ENCODE measurements at regions of chr1 and their contacts with region 1.

Region 1: DNA sequence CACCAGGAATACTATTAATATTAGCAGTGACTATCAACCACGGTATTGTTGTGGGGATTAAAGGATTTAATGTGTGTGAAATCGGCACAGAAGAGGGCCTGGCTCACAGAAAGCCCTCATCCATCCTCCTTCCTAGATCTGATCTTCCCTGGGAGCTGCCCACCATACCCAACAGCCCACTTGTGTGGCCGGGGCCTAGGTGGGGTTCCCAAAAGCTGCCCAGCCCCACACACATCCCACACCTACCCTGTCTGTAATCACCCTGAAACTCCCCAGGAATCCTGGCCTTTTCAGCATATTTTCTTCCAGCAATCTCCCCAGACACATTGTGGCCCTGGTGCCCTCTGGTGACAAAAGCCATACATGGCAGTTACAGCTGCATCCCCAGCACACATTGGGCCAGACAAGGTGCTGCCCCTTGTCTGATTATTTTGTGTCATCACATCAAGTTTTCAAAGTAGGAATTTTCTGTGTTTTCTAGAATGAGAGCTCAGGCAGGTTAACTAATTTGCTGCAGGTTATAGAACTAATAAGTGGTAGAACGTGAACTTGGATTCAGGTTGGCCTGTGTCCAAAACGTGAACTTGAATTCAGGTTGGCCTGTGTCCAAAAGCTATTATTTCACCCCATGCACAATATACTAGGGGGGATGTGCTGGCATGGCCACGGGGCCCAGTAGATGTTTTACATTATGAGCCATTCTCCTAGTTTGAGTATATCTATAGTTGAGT is 5.3 kb upstream of the SLC6A9 start:
- DNase-seq: peak; percentile 33 to 77 (median 67)
- ATAC-seq: peak; percentile 93
- H3K4me3 ChIP-seq: no peak overlapping the region
- H3K4me3 Mint-ChIP-seq: no peak overlapping the region
- H3K27ac ChIP-seq: no peak overlapping the region
- H3K27ac Mint-ChIP-seq: no peak overlapping the region
- H3K4me1 ChIP-seq: no peaks in the 10 kb centered on the region
- H3K4me1 Mint-ChIP-seq: peaks cover 3% of the 10 kb centered on the region
- H3K27me3 ChIP-seq: no peaks in the 10 kb centered on the region
- H3K27me3 Mint-ChIP-seq: no peaks in the 10 kb centered on the region
- CTCF ChIP-seq: peak; percentile 84

Region 2: GRCh38 chr1:43529206-43529731 is 507.3 kb before region 1 on chr1:
- CTCF ChIA-PET with region 1: interaction called, 8 read pairs
- POLR2A ChIA-PET with region 1: no interaction called
- intact Hi-C with region 1: loop called in 1 of 2 experiments (anchors 1 kb)
- DNase-seq: peak; percentile 60 to 89 (median 80)
- ATAC-seq: peak; percentile 65
- H3K4me3 ChIP-seq: no peak overlapping the region
- H3K4me3 Mint-ChIP-seq: peak overlapping the region; percentile 88
- H3K27ac ChIP-seq: no peak overlapping the region
- H3K27ac Mint-ChIP-seq: no peak overlapping the region
- H3K4me1 ChIP-seq: peaks cover 15% of the 10 kb centered on the region
- H3K4me1 Mint-ChIP-seq: peaks cover 21% of the 10 kb centered on the region
- H3K27me3 ChIP-seq: peaks cover 14% of the 10 kb centered on the region in 2 experiments
- H3K27me3 Mint-ChIP-seq: peaks cover 41% of the 10 kb centered on the region
- CTCF ChIP-seq: peak; percentile 96

Region 3: GRCh38 chr1:43554444-43554992 is 482.1 kb before region 1 on chr1:
- CTCF ChIA-PET with region 1: no interaction called
- POLR2A ChIA-PET with region 1: no interaction called
- intact Hi-C with region 1: no loop called
- DNase-seq: peak in 5 of 9 experiments; percentile 18 to 51 (median 21)
- ATAC-seq: no peak
- H3K4me3 ChIP-seq: no peak overlapping the region
- H3K4me3 Mint-ChIP-seq: no peak overlapping the region
- H3K27ac ChIP-seq: no peak overlapping the region
- H3K27ac Mint-ChIP-seq: no peak overlapping the region
- H3K4me1 ChIP-seq: no peaks in the 10 kb centered on the region
- H3K4me1 Mint-ChIP-seq: peaks cover 7% of the 10 kb centered on the region
- H3K27me3 ChIP-seq: peaks cover 0 to 2% of the 10 kb centered on the region in 2 experiments
- H3K27me3 Mint-ChIP-seq: peaks cover 18% of the 10 kb centered on the region
- CTCF ChIP-seq: peak; percentile 29

Region 4: DNA sequence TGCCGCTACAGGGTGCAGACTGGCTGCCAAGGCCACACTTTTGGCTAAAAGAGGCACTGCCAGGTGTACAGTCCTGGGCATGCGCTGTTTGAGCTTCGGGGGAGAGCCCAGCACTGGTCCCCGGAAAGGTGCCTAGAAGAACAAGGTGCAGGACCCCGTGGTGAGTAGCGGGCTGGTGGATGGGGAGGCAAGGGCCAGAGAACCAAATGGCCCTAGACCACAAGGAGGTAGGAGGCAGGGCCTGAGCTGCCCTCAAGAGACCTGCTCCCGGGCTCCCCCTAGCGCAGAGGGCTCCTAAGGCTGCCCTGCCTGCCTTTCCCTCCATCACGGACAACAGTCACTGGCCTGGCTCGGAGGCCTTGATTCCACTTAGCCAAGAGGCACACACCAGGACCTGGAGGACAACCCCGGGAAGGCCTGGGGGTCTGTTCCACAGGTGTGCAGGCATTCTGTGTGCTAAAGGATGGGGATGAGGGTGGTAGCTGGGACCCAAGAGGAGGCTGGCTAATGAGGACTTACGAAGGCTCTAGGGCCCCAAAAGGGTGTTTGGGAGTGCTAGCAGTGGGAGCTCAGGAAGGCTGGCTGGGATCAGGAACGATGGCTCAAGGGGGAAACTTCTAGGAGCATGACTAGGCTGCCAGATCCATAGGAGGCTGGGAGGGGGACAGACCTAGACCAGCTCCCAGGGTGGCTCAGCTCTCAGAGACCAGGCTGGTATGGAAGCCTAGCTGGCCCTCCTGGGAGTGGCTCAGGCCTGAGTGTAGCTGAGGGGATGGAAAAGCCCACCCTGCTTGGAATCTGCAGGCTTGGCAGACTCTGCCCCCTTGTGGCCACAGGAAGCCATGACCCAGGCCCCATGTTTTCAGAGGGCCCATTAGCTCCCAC is 102.2 kb before region 1 on chr1:
- CTCF ChIA-PET with region 1: interaction called, 7 read pairs
- POLR2A ChIA-PET with region 1: no interaction called
- intact Hi-C with region 1: loop called in 1 of 2 experiments (anchors 5 kb)
- DNase-seq: peak; percentile 24 to 68 (median 50)
- ATAC-seq: peak; percentile 69
- H3K4me3 ChIP-seq: no peak overlapping the region
- H3K4me3 Mint-ChIP-seq: no peak overlapping the region
- H3K27ac ChIP-seq: no peak overlapping the region
- H3K27ac Mint-ChIP-seq: no peak overlapping the region
- H3K4me1 ChIP-seq: peaks cover 14% of the 10 kb centered on the region
- H3K4me1 Mint-ChIP-seq: peaks cover 15% of the 10 kb centered on the region
- H3K27me3 ChIP-seq: peaks cover 23 to 27% of the 10 kb centered on the region in 2 experiments
- H3K27me3 Mint-ChIP-seq: peaks cover 29% of the 10 kb centered on the region
- CTCF ChIP-seq: peak; percentile 65

Region 5: GRCh38 chr1:44012941-44013609 is 23.5 kb before region 1 on chr1:
- CTCF ChIA-PET with region 1: interaction called, 337 read pairs
- POLR2A ChIA-PET with region 1: interaction called, 3 read pairs
- intact Hi-C with region 1: no loop called
- DNase-seq: no peak
- ATAC-seq: peak; percentile 42
- H3K4me3 ChIP-seq: no peak overlapping the region
- H3K4me3 Mint-ChIP-seq: no peak overlapping the region
- H3K27ac ChIP-seq: no peak overlapping the region
- H3K27ac Mint-ChIP-seq: no peak overlapping the region
- H3K4me1 ChIP-seq: peaks cover 17% of the 10 kb centered on the region
- H3K4me1 Mint-ChIP-seq: peaks cover 18% of the 10 kb centered on the region
- H3K27me3 ChIP-seq: no peaks in the 10 kb centered on the region
- H3K27me3 Mint-ChIP-seq: no peaks in the 10 kb centered on the region
- CTCF ChIP-seq: no peak

Region 6: GRCh38 chr1:44049839-44050238 is 13.3 kb after region 1 on chr1:
- CTCF ChIA-PET with region 1: interaction called, 37 read pairs
- POLR2A ChIA-PET with region 1: interaction called, 3 read pairs
- intact Hi-C with region 1: no loop called
- DNase-seq: no peak
- ATAC-seq: no peak
- H3K4me3 ChIP-seq: no peak overlapping the region
- H3K4me3 Mint-ChIP-seq: no peak overlapping the region
- H3K27ac ChIP-seq: no peak overlapping the region
- H3K27ac Mint-ChIP-seq: no peak overlapping the region
- H3K4me1 ChIP-seq: no peaks in the 10 kb centered on the region
- H3K4me1 Mint-ChIP-seq: no peaks in the 10 kb centered on the region
- H3K27me3 ChIP-seq: no peaks in the 10 kb centered on the region
- H3K27me3 Mint-ChIP-seq: peaks cover 15% of the 10 kb centered on the region
- CTCF ChIP-seq: no peak

Region 7: DNA sequence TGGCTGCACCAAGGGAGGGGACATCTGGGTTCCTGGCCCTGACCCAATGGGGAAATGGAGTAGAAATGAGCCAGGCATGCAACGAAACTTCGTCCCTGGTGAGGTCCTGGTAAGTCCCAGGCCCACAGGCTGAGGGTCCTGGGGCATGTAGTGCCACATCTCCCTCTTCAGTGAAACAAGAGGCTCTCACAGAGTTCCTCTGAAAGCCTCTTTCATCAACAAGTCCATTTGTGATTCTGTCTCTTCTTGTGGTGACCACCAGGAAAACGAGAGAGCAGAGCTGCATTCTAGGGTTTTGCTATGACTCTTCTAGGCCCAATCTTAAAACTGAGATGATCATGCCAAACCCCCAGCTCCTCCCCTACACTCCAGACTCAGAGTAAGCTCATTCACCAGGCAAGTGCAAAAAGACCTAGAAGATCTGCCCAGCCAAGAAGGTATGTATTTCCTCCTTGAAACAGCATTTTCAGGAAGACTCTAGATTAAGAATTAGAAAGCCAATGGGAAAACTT is 344.1 kb after region 1 on chr1:
- CTCF ChIA-PET with region 1: no interaction called
- POLR2A ChIA-PET with region 1: no interaction called
- intact Hi-C with region 1: no loop called
- DNase-seq: no peak
- ATAC-seq: no peak
- H3K4me3 ChIP-seq: no peak overlapping the region
- H3K4me3 Mint-ChIP-seq: no peak overlapping the region
- H3K27ac ChIP-seq: no peak overlapping the region
- H3K27ac Mint-ChIP-seq: no peak overlapping the region
- H3K4me1 ChIP-seq: no peaks in the 10 kb centered on the region
- H3K4me1 Mint-ChIP-seq: no peaks in the 10 kb centered on the region
- H3K27me3 ChIP-seq: no peaks in the 10 kb centered on the region
- H3K27me3 Mint-ChIP-seq: no peaks in the 10 kb centered on the region
- CTCF ChIP-seq: no peak

Measured in CD8-positive, alpha-beta T cell (primary cell).